ENCODE measurements at regions of chr3 and their contacts with region 1.

Region 1: GRCh38 chr3:18758047-18758704 is 333.0 kb upstream of the SATB1 start:
- DNase-seq: no peak
- H3K4me3 ChIP-seq: no peak overlapping the region
- H3K27ac ChIP-seq: no peak overlapping the region
- H3K27me3 ChIP-seq: peaks cover 0 to 3% (median 0%) of the 10 kb centered on the region in 45 donors
- CTCF ChIP-seq: peak in 55 of 56 donors; percentile 20 to 68 (median 52)

Region 2: DNA sequence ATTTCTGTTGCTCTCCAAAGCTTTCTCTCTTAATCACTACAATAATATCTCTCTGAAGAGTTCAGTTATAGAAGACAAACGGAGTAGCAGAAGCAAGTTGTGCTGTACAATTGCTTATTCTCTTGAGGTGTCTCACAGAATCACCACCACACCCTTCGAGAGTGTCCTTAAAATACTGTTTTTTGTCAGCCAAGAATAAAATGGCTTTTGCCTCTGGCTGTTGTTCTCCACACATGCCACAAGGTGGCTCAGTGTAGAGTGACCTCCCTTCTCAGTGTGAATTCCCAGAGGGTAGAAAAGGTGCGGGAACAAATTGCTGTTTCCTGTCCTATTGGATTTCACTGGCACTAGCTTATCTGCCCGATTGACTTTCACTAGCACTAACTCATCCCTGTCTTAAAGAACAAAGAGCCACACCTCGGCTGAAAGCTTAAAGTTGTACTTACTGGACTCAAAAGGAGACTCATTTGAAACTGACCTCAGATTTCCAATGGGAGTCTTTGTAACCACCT is 198.8 kb before region 1 on chr3:
- intact Hi-C with region 1: loop called in 1 of 2 experiments (anchors 10 kb)
- DNase-seq: no peak
- H3K4me3 ChIP-seq: no peak overlapping the region
- H3K27ac ChIP-seq: no peak overlapping the region
- H3K27me3 ChIP-seq: peaks cover 0 to 4% (median 0%) of the 10 kb centered on the region in 45 donors
- CTCF ChIP-seq: peak; percentile 28 to 73 (median 59)